PC-3 (cell line): ENCODE measurements at regions of chr2 and their contacts with region 1.

Region 1: DNA sequence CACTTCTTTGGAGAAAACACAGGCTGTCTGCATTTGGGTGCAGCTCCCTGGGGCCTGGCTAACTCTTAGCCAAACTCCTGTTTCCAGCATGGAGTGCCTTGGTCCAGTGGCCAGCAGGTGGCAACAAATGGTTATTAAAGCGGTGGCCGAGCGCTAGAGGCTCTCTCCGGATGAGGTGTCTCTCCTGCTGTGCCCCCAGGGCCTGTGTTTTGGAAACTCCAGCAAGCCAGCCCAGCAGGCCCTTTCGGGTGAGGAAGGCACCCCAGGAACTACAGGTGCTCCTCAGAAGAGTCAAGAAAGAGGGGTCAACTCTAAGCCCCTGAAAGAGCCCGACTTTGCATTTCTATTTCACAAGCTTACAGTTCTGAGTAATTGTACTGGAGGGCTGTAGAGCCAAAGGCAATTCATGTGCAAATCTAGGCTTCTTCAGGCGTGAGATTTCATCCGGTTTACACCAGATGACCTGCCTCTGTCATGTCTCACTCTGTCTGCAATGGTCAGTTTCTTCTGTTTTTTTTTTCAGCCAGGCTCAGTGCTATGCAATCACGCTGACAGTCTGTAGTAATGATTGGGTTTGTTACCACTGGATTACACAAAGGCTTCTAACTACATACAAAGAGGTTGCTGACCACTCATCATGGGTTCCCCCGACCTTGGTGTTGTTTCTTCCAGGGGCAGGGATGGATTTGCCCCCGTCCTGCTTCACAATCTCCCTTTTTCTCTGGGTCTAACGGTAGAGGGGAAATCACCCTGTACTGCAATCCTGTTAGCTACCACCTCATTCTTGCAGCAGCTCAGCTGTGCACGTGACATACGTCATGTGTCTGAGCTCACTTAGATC is 7.6 kb upstream of the CHRNA1 start:
- DNase-seq: peak; percentile 84
- ATAC-seq: peak; percentile 98
- H3K4me3 ChIP-seq: no peak overlapping the region
- H3K27ac ChIP-seq: no peak overlapping the region
- H3K4me1 ChIP-seq: peaks cover 8% of the 10 kb centered on the region; the same call in 1 of the 2 replicates
- H3K27me3 ChIP-seq: no peaks in the 10 kb centered on the region
- CTCF ChIP-seq: peak; percentile 93

Region 2: DNA sequence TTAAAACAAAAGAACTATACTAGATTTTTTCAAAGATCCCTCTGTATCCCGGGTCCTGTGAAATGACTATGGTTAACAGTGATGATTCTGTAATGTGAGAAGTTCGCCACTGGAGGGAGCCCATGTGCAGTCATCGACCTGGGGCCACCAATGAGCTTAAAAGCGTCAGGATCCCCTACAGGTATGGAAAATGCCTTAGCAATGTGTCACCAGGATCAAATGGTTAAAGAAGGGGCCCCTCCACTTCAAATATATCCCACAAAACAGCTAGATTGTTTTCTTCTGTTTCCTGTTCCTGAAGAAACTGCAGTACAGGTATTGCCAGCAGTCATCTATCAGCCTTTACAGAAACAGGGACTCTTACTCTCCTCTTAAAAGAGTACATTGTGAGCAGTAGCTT is 22.9 kb before region 1 on chr2:
- CTCF ChIA-PET with region 1: interaction called, 28 read pairs
- POLR2A ChIA-PET with region 1: interaction called, 4 read pairs
- intact Hi-C with region 1: no loop called
- DNase-seq: peak; percentile 91
- ATAC-seq: peak; percentile 80
- H3K4me3 ChIP-seq: no peak overlapping the region
- H3K27ac ChIP-seq: no peak overlapping the region
- H3K4me1 ChIP-seq: peaks cover 20% of the 10 kb centered on the region
- H3K27me3 ChIP-seq: no peaks in the 10 kb centered on the region
- CTCF ChIP-seq: peak; percentile 88

Region 3: DNA sequence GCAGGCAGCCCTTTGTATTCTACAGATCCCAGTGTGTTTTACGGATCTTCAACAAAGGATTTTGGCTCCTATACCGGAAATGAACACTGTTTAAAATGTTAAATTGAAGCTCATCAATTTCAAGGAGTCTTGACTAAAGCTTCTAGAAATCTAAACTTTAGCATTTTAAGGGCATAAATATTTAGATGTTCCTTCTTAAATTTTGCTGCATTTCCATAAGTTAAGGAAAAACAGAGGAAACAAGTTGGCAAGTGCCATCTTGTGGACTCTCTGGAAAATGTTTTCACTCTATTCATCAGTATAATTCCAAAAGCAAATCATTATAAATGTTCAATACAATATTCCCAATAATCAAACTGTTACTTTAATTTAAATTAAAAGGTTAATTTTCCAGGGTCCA is 213.8 kb after region 1 on chr2:
- CTCF ChIA-PET with region 1: interaction called, 14 read pairs
- POLR2A ChIA-PET with region 1: no interaction called
- intact Hi-C with region 1: loop called (anchors 1 kb)
- DNase-seq: peak; percentile 41
- ATAC-seq: peak; percentile 38; the same call in 1 of the 2 replicates
- H3K4me3 ChIP-seq: no peak overlapping the region
- H3K27ac ChIP-seq: no peak overlapping the region
- H3K4me1 ChIP-seq: no peaks in the 10 kb centered on the region
- H3K27me3 ChIP-seq: no peaks in the 10 kb centered on the region
- CTCF ChIP-seq: peak; percentile 85

Region 4: GRCh38 chr2:175004980-175005732 is 233.3 kb after region 1 on chr2 and contains the start of gene CHN1:
- CTCF ChIA-PET with region 1: interaction called, 18 read pairs
- POLR2A ChIA-PET with region 1: no interaction called
- intact Hi-C with region 1: no loop called
- DNase-seq: peak; percentile 61
- ATAC-seq: peak; percentile 70
- H3K4me3 ChIP-seq: peak within 1 kb of the TSS; percentile 73
- H3K27ac ChIP-seq: no peak within 1 kb of the TSS
- H3K4me1 ChIP-seq: peaks cover 3% of the 10 kb centered on the region; the same call in 1 of the 2 replicates
- H3K27me3 ChIP-seq: peaks cover 25% of the 10 kb centered on the region
- CTCF ChIP-seq: peak; percentile 38; the same call in 1 of the 2 replicates
- total RNA-seq, gene CHN1: 7.8 and 9.2 TPM in 2 replicates